B cell (primary cell): ENCODE measurements at regions of chr17 and their contacts with region 1.

Region 1: DNA sequence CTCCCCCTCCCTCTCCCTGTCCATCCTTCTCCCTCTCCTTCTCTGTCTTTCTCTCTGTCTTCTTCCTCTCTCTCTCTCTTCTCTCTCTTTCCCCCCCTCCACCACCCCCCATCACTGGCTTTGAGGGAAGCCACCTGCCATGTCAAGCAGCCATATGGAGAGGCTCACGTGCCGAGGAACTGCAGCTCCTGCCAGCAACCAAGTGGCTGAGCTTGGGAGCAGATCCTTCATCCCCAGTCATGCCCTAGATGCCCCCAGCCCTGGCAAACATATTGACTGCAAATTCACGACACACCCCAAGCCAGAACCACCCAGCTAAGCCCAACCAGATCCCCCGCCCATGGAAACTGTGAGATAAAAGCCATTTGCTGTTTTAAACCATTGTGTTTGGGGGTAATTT is 40.9 kb upstream of the RBFOX3 start:
- DNase-seq: no peak
- ATAC-seq: no peak
- H3K4me3 ChIP-seq: no peak overlapping the region
- H3K4me3 Mint-ChIP-seq: no peak overlapping the region
- H3K27ac ChIP-seq: no peak overlapping the region
- H3K27ac Mint-ChIP-seq: no peak overlapping the region
- H3K4me1 ChIP-seq: no peaks in the 10 kb centered on the region
- H3K4me1 Mint-ChIP-seq: no peaks in the 10 kb centered on the region
- H3K27me3 ChIP-seq: peaks cover 0 to 25% (median 3%) of the 10 kb centered on the region in 4 experiments
- H3K27me3 Mint-ChIP-seq: peaks cover 44% of the 10 kb centered on the region
- CTCF ChIP-seq: no peak

Region 2: GRCh38 chr17:78313735-78314648 is 1337.8 kb before region 1 on chr17:
- CTCF ChIA-PET with region 1: no interaction called
- POLR2A ChIA-PET with region 1: interaction called, 11 read pairs
- intact Hi-C with region 1: no loop called
- DNase-seq: peak; percentile 72
- ATAC-seq: peak; percentile 73
- H3K4me3 ChIP-seq: peak overlapping the region in 4 of 5 experiments; percentile 11 to 56 (median 50)
- H3K4me3 Mint-ChIP-seq: peak overlapping the region; percentile 68
- H3K27ac ChIP-seq: no peak overlapping the region
- H3K27ac Mint-ChIP-seq: no peak overlapping the region
- H3K4me1 ChIP-seq: peaks cover 35 to 41% of the 10 kb centered on the region in 2 donors
- H3K4me1 Mint-ChIP-seq: peaks cover 31% of the 10 kb centered on the region
- H3K27me3 ChIP-seq: peaks cover 0 to 33% (median 5%) of the 10 kb centered on the region in 4 experiments
- H3K27me3 Mint-ChIP-seq: peaks cover 11% of the 10 kb centered on the region
- CTCF ChIP-seq: no peak

Region 3: DNA sequence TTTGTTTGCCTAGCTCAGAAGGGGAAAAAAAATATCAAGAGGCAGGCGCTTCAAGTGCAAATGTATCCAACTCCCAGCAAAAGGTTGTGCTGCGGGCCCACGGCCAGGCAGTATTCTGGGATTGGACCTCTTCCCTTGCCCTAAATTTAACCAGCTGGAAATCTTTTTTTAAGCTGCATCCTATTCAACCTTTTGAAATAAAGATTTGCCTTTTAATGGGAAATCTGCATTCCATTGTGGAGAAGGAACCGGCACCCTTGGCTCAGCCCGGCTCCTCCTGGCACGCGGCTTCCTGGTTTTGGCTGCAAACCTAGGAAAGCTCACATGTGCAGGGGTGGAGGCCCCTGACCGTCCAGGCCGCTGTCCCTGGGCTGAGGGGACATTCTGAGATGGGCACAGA is 40.2 kb after region 1 on chr17:
- CTCF ChIA-PET with region 1: no interaction called
- POLR2A ChIA-PET with region 1: no interaction called
- intact Hi-C with region 1: no loop called
- DNase-seq: no peak
- ATAC-seq: no peak
- H3K4me3 ChIP-seq: no peak overlapping the region
- H3K4me3 Mint-ChIP-seq: no peak overlapping the region
- H3K27ac ChIP-seq: no peak overlapping the region
- H3K27ac Mint-ChIP-seq: no peak overlapping the region
- H3K4me1 ChIP-seq: no peaks in the 10 kb centered on the region
- H3K4me1 Mint-ChIP-seq: peaks cover 2% of the 10 kb centered on the region
- H3K27me3 ChIP-seq: peaks cover 0 to 39% (median 0%) of the 10 kb centered on the region in 4 experiments
- H3K27me3 Mint-ChIP-seq: peaks cover 38% of the 10 kb centered on the region
- CTCF ChIP-seq: no peak